Endothelial cell of umbilical vein (primary cell): ENCODE measurements at regions of chr17 and their contacts with region 1.

Region 1: GRCh38 chr17:32997753-32998632 is 6.3 kb downstream of the SPACA3 start:
- DNase-seq: peak; percentile 67
- H3K4me3 ChIP-seq: no peak overlapping the region
- H3K27ac ChIP-seq: no peak overlapping the region
- H3K4me1 ChIP-seq: no peaks in the 10 kb centered on the region
- H3K27me3 ChIP-seq: no peaks in the 10 kb centered on the region
- CTCF ChIP-seq: peak; percentile 86 to 95
- POLR2A ChIP-seq: no peak

Region 2: DNA sequence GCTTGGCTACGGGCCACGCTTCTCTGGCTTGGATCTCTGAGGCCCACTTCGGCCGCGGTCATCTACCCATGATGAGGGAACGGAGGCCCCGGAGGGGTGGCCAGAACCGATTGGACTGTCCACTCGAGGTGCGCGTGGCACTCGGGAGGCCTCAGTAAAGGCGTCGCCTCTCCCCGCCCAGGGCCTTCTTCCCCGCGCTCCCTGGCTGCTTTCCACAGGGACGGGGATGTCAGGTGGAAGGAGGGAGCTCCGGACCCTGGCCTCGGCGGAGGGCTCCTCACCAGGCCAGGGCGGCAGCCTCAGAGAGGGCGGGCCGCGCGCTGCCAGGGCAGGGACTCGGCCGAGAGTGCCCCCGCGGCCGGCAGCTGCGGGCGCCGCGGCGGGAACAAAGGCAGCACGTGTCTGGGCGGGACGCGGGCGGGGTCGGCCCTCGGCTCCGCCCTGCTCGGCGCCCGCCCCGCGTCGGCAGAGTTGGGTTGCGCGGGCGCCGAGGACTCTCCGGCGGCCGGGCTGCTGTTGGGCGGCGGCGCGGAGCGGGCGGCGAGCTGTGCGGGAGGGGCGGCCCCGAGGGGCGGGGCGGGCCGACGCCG is 511.8 kb before region 1 on chr17:
- CTCF ChIA-PET with region 1: interaction called, 7 read pairs
- POLR2A ChIA-PET with region 1: no interaction called
- dilution Hi-C with region 1: no loop called
- intact Hi-C with region 1: loop called (anchors 10 kb)
- DNase-seq: peak; percentile 70
- H3K4me3 ChIP-seq: peak overlapping the region in 1 of 3 experiments; percentile 47
- H3K27ac ChIP-seq: peak overlapping the region; percentile 50
- H3K4me1 ChIP-seq: peaks cover 6% of the 10 kb centered on the region
- H3K27me3 ChIP-seq: no peaks in the 10 kb centered on the region
- CTCF ChIP-seq: no peak
- POLR2A ChIP-seq: no peak

Region 3: GRCh38 chr17:32664936-32665583 is 332.9 kb before region 1 on chr17:
- CTCF ChIA-PET with region 1: interaction called, 3 read pairs
- POLR2A ChIA-PET with region 1: no interaction called
- dilution Hi-C with region 1: no loop called
- intact Hi-C with region 1: loop called (anchors 5 kb)
- DNase-seq: no peak
- H3K4me3 ChIP-seq: no peak overlapping the region
- H3K27ac ChIP-seq: no peak overlapping the region
- H3K4me1 ChIP-seq: no peaks in the 10 kb centered on the region
- H3K27me3 ChIP-seq: no peaks in the 10 kb centered on the region
- CTCF ChIP-seq: no peak
- POLR2A ChIP-seq: no peak

Region 4: GRCh38 chr17:33009636-33010035 is 11.6 kb after region 1 on chr17:
- CTCF ChIA-PET with region 1: interaction called, 24 read pairs
- POLR2A ChIA-PET with region 1: no interaction called
- dilution Hi-C with region 1: no loop called
- intact Hi-C with region 1: no loop called
- DNase-seq: no peak
- H3K4me3 ChIP-seq: no peak overlapping the region
- H3K27ac ChIP-seq: no peak overlapping the region
- H3K4me1 ChIP-seq: no peaks in the 10 kb centered on the region
- H3K27me3 ChIP-seq: no peaks in the 10 kb centered on the region
- CTCF ChIP-seq: no peak
- POLR2A ChIP-seq: no peak

Region 5: DNA sequence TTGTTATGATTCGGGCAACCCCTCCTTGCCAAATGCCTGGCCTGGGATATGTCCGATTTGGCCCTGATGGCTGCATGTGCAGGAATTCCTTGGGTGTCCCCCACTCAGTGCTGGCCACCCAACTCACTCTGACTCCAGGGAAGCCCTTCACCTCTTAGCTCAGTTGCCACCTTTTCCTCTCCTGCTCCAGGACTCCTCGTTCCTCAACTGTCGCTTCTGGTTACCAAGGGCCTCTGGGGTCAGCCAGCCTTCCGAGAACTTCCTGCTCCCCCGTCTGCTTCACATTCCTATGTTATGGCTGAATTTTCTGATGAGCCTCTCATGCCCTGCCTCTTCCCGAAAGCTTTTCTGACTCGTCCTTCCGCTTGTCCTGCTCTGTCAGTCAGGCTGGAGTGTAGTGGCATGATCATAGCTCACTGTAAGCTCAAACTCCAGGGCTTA is 57.2 kb after region 1 on chr17:
- CTCF ChIA-PET with region 1: no interaction called
- POLR2A ChIA-PET with region 1: no interaction called
- dilution Hi-C with region 1: no loop called
- intact Hi-C with region 1: no loop called
- DNase-seq: no peak
- H3K4me3 ChIP-seq: no peak overlapping the region
- H3K27ac ChIP-seq: no peak overlapping the region
- H3K4me1 ChIP-seq: no peaks in the 10 kb centered on the region
- H3K27me3 ChIP-seq: no peaks in the 10 kb centered on the region
- CTCF ChIP-seq: no peak
- POLR2A ChIP-seq: no peak

Region 6: GRCh38 chr17:33750943-33751701 is 753.1 kb after region 1 on chr17:
- CTCF ChIA-PET with region 1: interaction called, 14 read pairs
- POLR2A ChIA-PET with region 1: no interaction called
- dilution Hi-C with region 1: no loop called
- intact Hi-C with region 1: no loop called
- DNase-seq: peak; percentile 64
- H3K4me3 ChIP-seq: peak overlapping the region in 1 of 3 experiments; percentile 7
- H3K27ac ChIP-seq: no peak overlapping the region
- H3K4me1 ChIP-seq: no peaks in the 10 kb centered on the region
- H3K27me3 ChIP-seq: no peaks in the 10 kb centered on the region
- CTCF ChIP-seq: peak; percentile 70 to 79
- POLR2A ChIP-seq: no peak